ENCODE measurements at regions of chr10 and their contacts with region 1.

Region 1: DNA sequence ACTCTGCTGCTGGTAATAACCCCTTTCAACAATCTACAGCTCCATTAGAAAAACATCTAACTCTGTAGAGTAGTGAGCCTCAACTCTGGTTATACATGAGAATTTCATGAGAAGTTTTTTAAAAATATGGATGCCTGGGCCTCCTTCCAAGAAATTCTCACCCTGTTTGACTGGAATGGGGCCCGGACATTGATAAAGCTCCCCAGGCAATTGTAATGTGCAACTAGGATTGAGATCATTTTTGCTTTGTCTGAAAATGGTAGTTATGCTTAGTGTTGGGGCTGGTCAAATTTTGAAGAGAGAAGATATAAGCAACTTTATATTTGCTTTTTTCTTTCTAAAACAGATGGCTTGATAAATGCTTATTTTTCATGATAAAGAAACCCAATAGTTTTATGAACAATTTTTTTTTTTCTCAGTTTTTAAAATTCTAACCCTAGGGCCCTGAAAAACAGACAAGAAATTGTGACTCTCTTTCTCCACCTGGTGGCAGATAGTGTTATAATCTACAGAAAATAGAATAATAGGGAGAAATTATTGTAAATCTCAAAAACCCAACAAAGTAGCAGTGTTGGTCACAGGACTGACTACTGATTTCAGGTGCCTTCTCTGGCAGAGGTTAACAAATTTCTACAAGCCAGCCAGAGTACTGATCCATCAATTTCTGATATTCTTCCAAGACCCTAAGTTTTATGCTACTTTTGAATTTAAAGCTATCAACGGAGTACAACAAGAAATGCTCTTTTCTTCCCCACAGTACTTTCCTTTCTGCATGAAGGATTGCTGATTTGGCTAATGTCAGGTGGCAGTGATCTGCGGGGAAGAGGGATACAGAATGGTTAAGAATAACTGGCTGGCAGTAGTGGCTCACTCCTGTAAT is 174.8 kb downstream of the DKK1 start:
- DNase-seq: no peak
- H3K4me3 ChIP-seq: no peak overlapping the region
- H3K27ac ChIP-seq: no peak overlapping the region
- H3K4me1 ChIP-seq: no peaks in the 10 kb centered on the region
- H3K27me3 ChIP-seq: no peaks in the 10 kb centered on the region
- CTCF ChIP-seq: peak; percentile 55 to 65 (median 56)

Region 2: DNA sequence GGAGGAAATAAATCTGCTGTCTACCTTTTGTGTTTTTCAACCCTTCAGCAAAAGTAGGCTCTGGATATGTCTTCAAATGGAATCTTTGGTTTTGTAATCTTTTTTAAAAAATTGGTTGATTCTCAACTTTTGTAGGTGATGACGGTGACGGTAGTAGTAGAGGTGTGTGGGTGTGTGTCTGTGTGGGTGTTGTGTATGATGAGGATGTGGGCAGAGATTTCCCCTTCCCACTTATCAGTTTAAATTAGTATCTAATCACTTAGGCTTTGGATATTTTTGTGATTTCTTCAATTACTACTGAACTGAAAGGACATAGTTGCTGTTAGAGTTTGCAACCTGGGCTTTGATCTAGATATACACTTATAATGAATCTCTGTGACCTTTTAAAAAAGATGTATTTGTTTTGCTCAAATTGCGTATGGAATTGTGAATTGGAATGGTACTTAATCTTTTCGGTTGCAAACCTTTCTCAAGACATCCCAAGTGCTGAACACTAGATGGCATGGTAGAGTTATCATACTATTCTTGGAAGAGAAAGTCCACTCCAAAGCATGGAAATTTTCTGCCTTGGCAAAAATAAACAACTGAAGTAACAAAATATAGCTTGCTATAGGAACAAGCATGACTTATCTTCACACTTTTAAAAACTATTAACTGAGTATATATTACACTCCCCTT is 1551.5 kb before region 1 on chr10:
- intact Hi-C with region 1: loop called (anchors 5 kb)
- DNase-seq: no peak
- H3K4me3 ChIP-seq: no peak overlapping the region
- H3K27ac ChIP-seq: no peak overlapping the region
- H3K4me1 ChIP-seq: no peaks in the 10 kb centered on the region
- H3K27me3 ChIP-seq: no peaks in the 10 kb centered on the region
- CTCF ChIP-seq: peak in 2 of 3 experiments; percentile 49 to 58

Region 3: GRCh38 chr10:51109801-51110533 is 1378.9 kb before region 1 on chr10:
- intact Hi-C with region 1: no loop called
- DNase-seq: no peak
- H3K4me3 ChIP-seq: no peak overlapping the region
- H3K27ac ChIP-seq: no peak overlapping the region
- H3K4me1 ChIP-seq: peaks cover 0 to 58% of the 10 kb centered on the region in 2 donors
- H3K27me3 ChIP-seq: no peaks in the 10 kb centered on the region
- CTCF ChIP-seq: no peak

Region 4: GRCh38 chr10:52308251-52309031 is 180.4 kb before region 1 on chr10:
- intact Hi-C with region 1: loop called (anchors 1 kb)
- DNase-seq: peak in 1 of 2 donors; percentile 62
- H3K4me3 ChIP-seq: peak overlapping the region; percentile 48 to 63
- H3K27ac ChIP-seq: no peak overlapping the region
- H3K4me1 ChIP-seq: peaks cover 0 to 7% of the 10 kb centered on the region in 2 donors
- H3K27me3 ChIP-seq: no peaks in the 10 kb centered on the region
- CTCF ChIP-seq: peak; percentile 49 to 75 (median 63)

Region 5: GRCh38 chr10:52313933-52314816 is 174.7 kb before region 1 on chr10 and contains the start of gene DKK1:
- intact Hi-C with region 1: loop called (anchors 2 kb)
- DNase-seq: peak in 1 of 2 donors; percentile 75
- H3K4me3 ChIP-seq: peak within 1 kb of the TSS; percentile 58 to 68
- H3K27ac ChIP-seq: no peak within 1 kb of the TSS
- H3K4me1 ChIP-seq: peaks cover 5 to 16% of the 10 kb centered on the region in 2 donors
- H3K27me3 ChIP-seq: no peaks in the 10 kb centered on the region
- CTCF ChIP-seq: peak; percentile 52 to 69 (median 55)
- total RNA-seq, gene DKK1: 1.6 TPM